CD8-positive, alpha-beta memory T cell (primary cell): ENCODE measurements at regions of chr12 and their contacts with region 1.

Region 1: GRCh38 chr12:43882578-43883178 is 46.8 kb downstream of the TMEM117 start:
- DNase-seq: peak in 4 of 5 donors; percentile 5 to 48 (median 42)
- H3K4me3 ChIP-seq: no peak overlapping the region
- H3K4me3 Mint-ChIP-seq: no peak overlapping the region
- H3K27ac ChIP-seq: no peak overlapping the region
- H3K27ac Mint-ChIP-seq: no peak overlapping the region
- H3K4me1 ChIP-seq: no peaks in the 10 kb centered on the region
- H3K4me1 Mint-ChIP-seq: no peaks in the 10 kb centered on the region
- H3K27me3 ChIP-seq: no peaks in the 10 kb centered on the region
- H3K27me3 Mint-ChIP-seq: no peaks in the 10 kb centered on the region

Region 2: DNA sequence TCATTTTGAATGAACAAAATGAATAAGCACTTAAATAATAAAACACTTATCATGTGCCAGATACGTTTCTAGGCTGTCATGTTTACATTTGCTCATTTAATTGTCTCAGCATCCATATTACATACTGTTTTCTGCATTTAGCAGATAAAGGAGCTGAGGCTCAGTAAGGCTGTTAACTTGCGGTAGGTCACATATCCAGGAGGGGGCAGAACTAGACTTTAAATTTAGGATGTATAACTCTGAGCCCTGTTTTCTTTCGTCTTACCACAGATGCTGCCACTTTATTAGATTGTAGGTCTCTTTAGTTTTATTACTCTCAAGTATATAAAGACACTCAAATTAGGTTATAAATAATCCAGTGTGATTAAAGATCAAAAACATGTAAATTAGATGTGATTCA is 106.2 kb before region 1 on chr12:
- CTCF ChIA-PET with region 1: interaction called, 17 read pairs
- POLR2A ChIA-PET with region 1: no interaction called
- DNase-seq: peak in 2 of 5 donors; percentile 22 to 25
- H3K4me3 ChIP-seq: no peak overlapping the region
- H3K4me3 Mint-ChIP-seq: no peak overlapping the region
- H3K27ac ChIP-seq: no peak overlapping the region
- H3K27ac Mint-ChIP-seq: no peak overlapping the region
- H3K4me1 ChIP-seq: no peaks in the 10 kb centered on the region
- H3K4me1 Mint-ChIP-seq: peaks cover 5 to 7% (median 5%) of the 10 kb centered on the region in 3 donors
- H3K27me3 ChIP-seq: no peaks in the 10 kb centered on the region
- H3K27me3 Mint-ChIP-seq: no peaks in the 10 kb centered on the region